ENCODE measurements at regions of chr3 and their contacts with region 1.

Region 1: DNA sequence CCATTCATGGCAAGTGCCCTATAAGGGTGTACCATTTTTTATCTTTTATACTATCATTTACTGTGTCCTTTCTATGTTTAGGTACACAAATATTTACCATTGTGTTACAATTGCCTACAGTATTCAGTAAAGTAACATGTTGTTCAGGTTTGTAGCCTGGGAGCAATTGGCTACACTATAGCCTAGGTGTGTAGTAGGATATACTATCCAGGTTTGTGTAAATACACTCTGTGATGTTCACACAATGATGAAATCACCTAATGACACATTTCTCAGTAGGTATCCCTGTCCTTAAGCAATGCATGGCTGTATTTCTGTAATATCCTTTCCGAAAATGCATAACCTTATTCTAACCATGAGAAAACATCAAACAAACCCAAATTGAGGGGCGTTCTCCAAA is 17.9 kb upstream of the CNOT10 start:
- DNase-seq: no peak
- ATAC-seq: no peak
- H3K4me3 ChIP-seq: no peak overlapping the region
- H3K27ac ChIP-seq: no peak overlapping the region
- H3K4me1 ChIP-seq: no peaks in the 10 kb centered on the region
- H3K27me3 ChIP-seq: no peaks in the 10 kb centered on the region
- CTCF ChIP-seq: no peak
- POLR2A ChIP-seq: no peak

Region 2: DNA sequence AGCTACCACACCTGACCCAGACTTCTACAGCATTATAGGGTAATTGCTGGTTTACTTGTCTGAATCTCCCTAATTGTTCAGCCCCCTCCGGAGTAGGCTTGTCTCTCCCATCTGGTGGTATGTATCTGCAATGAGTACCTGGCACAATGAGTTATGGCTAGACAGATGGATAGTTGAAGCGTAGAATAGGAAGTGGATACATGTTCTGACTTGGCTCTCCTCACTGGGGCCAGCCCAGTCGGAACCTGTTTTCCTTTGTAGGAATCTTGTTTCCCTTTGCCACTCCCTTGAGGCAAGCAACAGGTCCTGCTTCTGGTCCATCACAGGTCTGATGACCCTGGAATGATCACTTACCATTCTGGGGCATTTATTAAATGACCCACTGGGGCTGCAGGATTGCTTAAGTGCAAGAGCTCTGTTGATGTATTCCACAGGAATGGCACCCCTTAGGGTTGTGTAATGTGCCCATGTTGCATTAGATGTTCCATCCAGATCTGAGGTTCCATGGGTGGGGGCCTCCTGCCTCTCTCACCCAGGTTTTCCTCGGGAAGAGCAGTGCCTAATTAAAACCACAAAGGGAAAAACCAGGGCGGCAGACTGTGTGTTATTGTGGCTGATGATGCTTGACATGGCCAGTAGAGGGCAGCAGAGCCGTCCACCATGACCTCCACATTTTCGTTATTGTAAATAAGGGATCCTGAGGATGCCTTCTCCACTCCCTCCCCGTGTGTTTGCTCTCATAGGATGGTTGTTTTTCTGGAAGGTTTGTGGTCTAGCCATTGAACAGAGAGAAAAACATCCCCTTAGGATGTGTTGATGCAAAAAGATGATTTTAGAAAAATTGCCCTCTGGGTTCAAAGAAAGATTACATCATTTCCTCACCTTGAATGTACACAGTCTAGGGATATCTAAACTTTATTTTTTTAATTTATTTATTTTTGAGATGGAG is 370.6 kb before region 1 on chr3:
- in situ Hi-C with region 1: loop called in 1 of 4 experiments (anchors 10 kb)
- intact Hi-C with region 1: no loop called
- DNase-seq: peak; percentile 19 to 28
- ATAC-seq: peak; percentile 51 to 63
- H3K4me3 ChIP-seq: no peak overlapping the region
- H3K27ac ChIP-seq: no peak overlapping the region
- H3K4me1 ChIP-seq: no peaks in the 10 kb centered on the region
- H3K27me3 ChIP-seq: no peaks in the 10 kb centered on the region
- CTCF ChIP-seq: peak; percentile 61 to 90 (median 75)
- POLR2A ChIP-seq: no peak

Region 3: GRCh38 chr3:32374788-32375595 is 292.1 kb before region 1 on chr3:
- in situ Hi-C with region 1: loop called in 1 of 4 experiments (anchors 25 kb)
- intact Hi-C with region 1: loop called (anchors 10 kb)
- DNase-seq: peak; percentile 6 to 18
- ATAC-seq: peak; percentile 36 to 49
- H3K4me3 ChIP-seq: no peak overlapping the region
- H3K27ac ChIP-seq: no peak overlapping the region
- H3K4me1 ChIP-seq: no peaks in the 10 kb centered on the region
- H3K27me3 ChIP-seq: no peaks in the 10 kb centered on the region
- CTCF ChIP-seq: peak; percentile 22 to 66 (median 62)
- POLR2A ChIP-seq: no peak

Region 4: GRCh38 chr3:32502118-32502945 is 164.8 kb before region 1 on chr3 and contains the start of gene CMTM6:
- in situ Hi-C with region 1: loop called in 3 of 4 experiments (anchors 5 to 10 kb)
- intact Hi-C with region 1: no loop called
- DNase-seq: peak; percentile 68 to 71
- ATAC-seq: peak; percentile 95 to 96
- H3K4me3 ChIP-seq: peak within 1 kb of the TSS; percentile 86 to 99 (median 93)
- H3K27ac ChIP-seq: peak within 1 kb of the TSS; percentile 91 to 94 (median 94)
- H3K4me1 ChIP-seq: peaks cover 9 to 14% of the 10 kb centered on the region in 2 donors
- H3K27me3 ChIP-seq: no peaks in the 10 kb centered on the region
- CTCF ChIP-seq: no peak
- POLR2A ChIP-seq: peak; percentile 62 to 63
- total RNA-seq, gene CMTM6: 3.7 to 8.8 (median 7.3) TPM

Region 5: DNA sequence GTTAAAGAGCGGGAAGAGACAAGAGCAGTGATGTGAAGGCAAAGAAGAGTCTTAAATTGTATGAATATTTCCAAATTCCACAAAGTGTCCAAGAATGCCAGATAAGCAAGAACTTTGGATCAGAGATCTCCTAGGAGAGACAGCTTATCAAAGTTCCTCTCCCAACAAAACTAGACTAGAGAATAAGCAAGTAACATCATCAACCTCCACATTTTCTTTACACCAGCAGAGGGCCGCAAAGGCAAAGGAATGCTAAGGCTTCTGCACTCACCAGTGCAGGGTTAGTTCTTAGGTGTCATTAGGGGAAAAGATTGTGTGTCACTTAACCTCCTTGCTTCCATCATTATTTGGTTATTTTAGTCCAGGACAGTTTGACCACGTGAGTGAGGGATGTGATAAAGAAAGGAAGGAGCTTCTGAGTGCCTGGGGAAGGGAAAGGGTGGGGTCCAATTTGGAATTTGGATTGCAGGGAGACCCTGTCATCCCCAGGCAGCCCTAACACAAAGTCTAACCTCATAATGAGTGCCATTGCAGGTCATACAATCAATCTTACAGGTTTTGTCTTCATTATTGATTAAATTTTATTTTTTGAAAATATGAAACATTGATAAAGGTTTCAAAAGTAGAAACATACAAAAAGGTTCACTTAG is 156.9 kb before region 1 on chr3:
- in situ Hi-C with region 1: loop called (anchors 5 to 10 kb)
- intact Hi-C with region 1: loop called (anchors 1 kb)
- DNase-seq: peak; percentile 27 to 57
- ATAC-seq: peak; percentile 80 to 85
- H3K4me3 ChIP-seq: no peak overlapping the region
- H3K27ac ChIP-seq: no peak overlapping the region
- H3K4me1 ChIP-seq: no peaks in the 10 kb centered on the region
- H3K27me3 ChIP-seq: no peaks in the 10 kb centered on the region
- CTCF ChIP-seq: peak; percentile 62 to 71 (median 66)
- POLR2A ChIP-seq: no peak

Region 6: GRCh38 chr3:32733631-32734229 is 66.6 kb after region 1 on chr3:
- in situ Hi-C with region 1: no loop called
- intact Hi-C with region 1: no loop called
- DNase-seq: no peak
- ATAC-seq: no peak
- H3K4me3 ChIP-seq: no peak overlapping the region
- H3K27ac ChIP-seq: no peak overlapping the region
- H3K4me1 ChIP-seq: no peaks in the 10 kb centered on the region
- H3K27me3 ChIP-seq: no peaks in the 10 kb centered on the region
- CTCF ChIP-seq: peak in 2 of 5 experiments; percentile 4 to 32
- POLR2A ChIP-seq: no peak

Measured in gastrocnemius medialis (tissue), 4 donors.